ENCODE measurements at regions of chr3 and their contacts with region 1.

Region 1: DNA sequence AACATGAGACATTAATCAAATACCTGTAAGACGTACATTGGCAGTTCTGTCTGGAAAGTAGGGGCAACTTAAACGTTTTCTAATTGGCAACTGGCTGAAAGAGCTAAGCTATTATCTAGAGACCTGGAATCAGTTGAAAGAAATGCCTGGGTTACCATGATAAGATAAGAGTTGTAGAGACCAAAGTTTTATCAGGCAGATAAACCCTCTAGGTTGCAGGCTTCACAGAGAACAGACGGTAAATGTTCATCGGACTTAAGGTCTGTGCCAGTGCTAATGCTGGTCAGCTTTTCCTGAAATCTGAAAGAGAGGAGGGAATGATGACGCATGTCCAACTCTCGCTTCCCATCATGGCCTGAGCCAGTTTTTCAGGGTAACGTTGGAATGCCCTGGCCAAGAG is 196.2 kb downstream of the ROBO2 start:
- DNase-seq: no peak
- H3K4me3 ChIP-seq: no peak overlapping the region
- H3K27ac ChIP-seq: no peak overlapping the region
- H3K4me1 ChIP-seq: no peaks in the 10 kb centered on the region
- H3K27me3 ChIP-seq: no peaks in the 10 kb centered on the region
- CTCF ChIP-seq: no peak

Region 2: DNA sequence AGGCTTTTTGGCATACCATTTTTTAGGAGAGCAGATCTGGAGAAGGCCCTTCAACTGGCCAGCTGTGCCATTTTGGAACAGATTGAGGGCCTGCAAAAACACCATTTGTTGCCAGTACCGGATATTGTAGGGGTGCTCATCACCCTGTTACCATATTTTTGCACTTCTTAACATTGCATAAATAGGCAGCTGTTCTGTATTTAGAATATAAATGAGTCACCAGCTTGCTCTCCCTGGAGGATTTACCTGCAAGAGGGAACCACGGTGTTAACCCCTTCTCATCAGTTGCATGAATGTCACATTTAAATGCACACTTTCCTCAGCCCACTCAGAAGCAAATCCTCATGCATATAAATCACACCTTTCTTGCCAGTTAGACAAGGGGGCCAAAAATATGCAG is 239.4 kb after region 1 on chr3:
- CTCF ChIA-PET with region 1: no interaction called
- POLR2A ChIA-PET with region 1: no interaction called
- intact Hi-C with region 1: no loop called
- DNase-seq: no peak
- H3K4me3 ChIP-seq: no peak overlapping the region
- H3K27ac ChIP-seq: no peak overlapping the region
- H3K4me1 ChIP-seq: no peaks in the 10 kb centered on the region
- H3K27me3 ChIP-seq: no peaks in the 10 kb centered on the region
- CTCF ChIP-seq: no peak

Region 3: GRCh38 chr3:78545827-78546226 is 1309.7 kb after region 1 on chr3:
- CTCF ChIA-PET with region 1: no interaction called
- POLR2A ChIA-PET with region 1: interaction called, 22 read pairs
- intact Hi-C with region 1: no loop called
- DNase-seq: no peak
- H3K4me3 ChIP-seq: no peak overlapping the region
- H3K27ac ChIP-seq: no peak overlapping the region
- H3K4me1 ChIP-seq: no peaks in the 10 kb centered on the region
- H3K27me3 ChIP-seq: no peaks in the 10 kb centered on the region
- CTCF ChIP-seq: no peak

Measured in PC-9 (cell line).